ENCODE measurements at regions of chr1 and their contacts with region 1.

Region 1: GRCh38 chr1:224168859-224169380 is 14.1 kb upstream of the DEGS1 start:
- DNase-seq: peak; percentile 29
- ATAC-seq: peak; percentile 96
- H3K4me3 Mint-ChIP-seq: peak overlapping the region; percentile 14
- H3K27ac Mint-ChIP-seq: peak overlapping the region; percentile 55
- H3K4me1 Mint-ChIP-seq: peaks cover 36% of the 10 kb centered on the region
- H3K27me3 Mint-ChIP-seq: no peaks in the 10 kb centered on the region

Region 2: DNA sequence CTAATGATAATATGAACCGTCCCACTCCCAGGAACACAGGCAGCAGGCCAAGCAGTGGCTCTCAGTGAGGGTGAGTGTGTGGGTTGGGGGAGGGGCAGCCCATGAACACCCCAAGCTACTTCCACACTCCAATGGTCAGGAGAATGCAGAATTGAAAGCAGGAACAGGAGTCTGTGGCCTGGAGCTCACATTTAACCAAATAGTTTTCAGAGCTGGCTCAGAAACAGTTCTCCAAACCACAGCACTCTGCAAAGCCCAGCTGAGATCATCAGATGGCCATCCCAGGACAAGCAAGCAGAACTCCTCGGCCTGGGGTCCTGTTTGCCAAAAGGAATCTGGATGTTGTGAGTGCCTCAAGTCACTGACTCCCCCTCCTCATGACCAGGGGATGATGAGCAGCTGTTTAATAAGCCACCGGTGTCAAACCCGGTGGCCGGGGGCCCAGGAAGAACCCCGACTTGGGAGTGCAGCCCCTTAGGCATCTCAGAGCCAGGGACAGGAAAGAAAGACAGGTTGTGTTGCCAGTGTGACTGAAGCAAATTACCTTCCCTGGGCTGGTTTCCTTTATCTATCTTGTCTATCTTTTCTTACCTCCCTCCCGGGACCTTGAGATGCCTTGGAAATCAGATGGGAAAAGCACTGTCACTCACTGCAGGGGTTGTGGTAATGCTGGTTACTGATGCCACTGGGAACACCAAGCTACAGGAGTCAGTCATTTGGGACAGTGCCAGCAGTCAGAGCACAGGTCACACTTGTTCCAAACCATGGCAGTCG is 34.5 kb after region 1 on chr1:
- CTCF ChIA-PET with region 1: no interaction called
- POLR2A ChIA-PET with region 1: interaction called, 3 read pairs
- intact Hi-C with region 1: loop called in 1 of 2 experiments (anchors 2 kb)
- DNase-seq: no peak
- ATAC-seq: no peak
- H3K4me3 Mint-ChIP-seq: no peak overlapping the region
- H3K27ac Mint-ChIP-seq: no peak overlapping the region
- H3K4me1 Mint-ChIP-seq: peaks cover 13% of the 10 kb centered on the region
- H3K27me3 Mint-ChIP-seq: no peaks in the 10 kb centered on the region

Region 3: DNA sequence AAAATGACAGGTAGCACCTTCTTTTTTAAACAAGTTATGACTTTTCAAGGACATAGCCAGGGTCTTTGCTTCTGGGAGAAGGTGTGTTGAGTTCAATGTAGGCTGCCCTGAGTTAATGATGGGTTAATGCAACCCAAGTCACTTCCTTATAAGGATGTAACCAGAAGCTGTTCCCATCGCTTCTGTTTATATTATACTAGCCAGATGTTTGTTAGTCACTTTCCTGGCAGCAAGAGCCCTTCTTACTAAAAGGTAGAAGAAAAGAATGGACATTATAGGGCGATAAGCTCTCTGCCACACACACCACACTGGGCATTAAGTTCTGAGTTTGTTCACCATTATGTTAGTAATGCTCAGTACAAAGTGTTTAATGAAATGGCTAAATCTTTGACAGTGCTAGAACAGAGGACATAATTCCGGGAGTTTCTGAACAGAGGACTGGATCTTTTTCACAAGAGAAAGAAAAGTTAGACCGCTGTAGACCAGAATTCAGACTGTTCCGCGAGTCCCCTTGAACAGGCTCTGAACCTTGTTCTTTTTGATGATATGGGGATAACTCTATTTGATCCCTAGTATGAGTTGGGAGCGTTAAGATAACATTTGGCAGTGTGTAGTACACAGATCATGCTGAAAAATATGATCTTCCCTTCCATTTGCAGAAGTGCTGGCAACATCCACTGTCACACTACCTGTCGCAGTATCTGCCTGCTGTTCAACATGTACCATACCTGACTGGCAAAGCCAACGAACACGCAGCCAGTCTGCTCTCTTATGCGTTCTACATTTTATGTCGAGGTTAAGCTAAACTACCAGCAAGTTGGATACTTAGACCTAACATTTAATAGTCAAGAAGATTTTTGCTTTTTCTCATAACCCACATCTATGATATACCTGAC is 55.1 kb after region 1 on chr1:
- CTCF ChIA-PET with region 1: no interaction called
- POLR2A ChIA-PET with region 1: no interaction called
- intact Hi-C with region 1: no loop called
- DNase-seq: no peak
- ATAC-seq: no peak
- H3K4me3 Mint-ChIP-seq: no peak overlapping the region
- H3K27ac Mint-ChIP-seq: no peak overlapping the region
- H3K4me1 Mint-ChIP-seq: no peaks in the 10 kb centered on the region
- H3K27me3 Mint-ChIP-seq: no peaks in the 10 kb centered on the region

Measured in activated CD4-positive, alpha-beta T cell treated with anti-CD3 and anti-CD28 coated beads for 36 hours (primary cell).